ENCODE measurements at regions of chr6 and their contacts with region 1.

Region 1: GRCh38 chr6:63598049-63599036 is 26.1 kb downstream of the LOC128125822 start:
- DNase-seq: peak; percentile 82
- ATAC-seq: peak; percentile 100
- H3K4me3 Mint-ChIP-seq: peak overlapping the region; percentile 82
- H3K27ac Mint-ChIP-seq: peak overlapping the region; percentile 20
- H3K4me1 Mint-ChIP-seq: peaks cover 22% of the 10 kb centered on the region
- H3K27me3 Mint-ChIP-seq: peaks cover 3% of the 10 kb centered on the region

Region 2: GRCh38 chr6:63573140-63573898 is 25.0 kb before region 1 on chr6:
- CTCF ChIA-PET with region 1: interaction called, 17 read pairs
- POLR2A ChIA-PET with region 1: interaction called, 8 read pairs
- DNase-seq: peak; percentile 76
- ATAC-seq: peak; percentile 40
- H3K4me3 Mint-ChIP-seq: peak overlapping the region; percentile 96
- H3K27ac Mint-ChIP-seq: peak overlapping the region; percentile 97
- H3K4me1 Mint-ChIP-seq: peaks cover 40% of the 10 kb centered on the region
- H3K27me3 Mint-ChIP-seq: no peaks in the 10 kb centered on the region

Region 3: DNA sequence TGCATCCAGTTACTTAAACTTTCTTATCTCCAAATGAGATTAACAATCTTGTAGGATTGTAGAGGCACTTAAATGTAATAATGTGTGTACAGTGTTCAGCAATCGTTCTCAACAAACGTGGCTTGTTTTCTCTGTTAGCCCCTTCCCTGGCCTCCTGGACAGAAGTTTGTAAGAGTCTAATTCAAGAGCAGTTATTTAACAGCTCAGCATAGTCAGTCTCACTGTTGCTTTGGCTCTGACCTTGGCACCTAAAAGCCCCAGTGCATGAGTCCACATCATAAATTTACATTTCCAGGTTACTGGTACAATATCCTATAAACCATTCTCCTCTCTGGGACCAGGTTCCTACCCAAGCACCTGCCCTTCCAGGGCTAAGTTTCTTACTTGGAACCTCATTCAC is 25.7 kb after region 1 on chr6:
- CTCF ChIA-PET with region 1: interaction called, 14 read pairs
- POLR2A ChIA-PET with region 1: no interaction called
- DNase-seq: no peak
- ATAC-seq: no peak
- H3K4me3 Mint-ChIP-seq: no peak overlapping the region
- H3K27ac Mint-ChIP-seq: no peak overlapping the region
- H3K4me1 Mint-ChIP-seq: no peaks in the 10 kb centered on the region
- H3K27me3 Mint-ChIP-seq: peaks cover 17% of the 10 kb centered on the region

Region 4: DNA sequence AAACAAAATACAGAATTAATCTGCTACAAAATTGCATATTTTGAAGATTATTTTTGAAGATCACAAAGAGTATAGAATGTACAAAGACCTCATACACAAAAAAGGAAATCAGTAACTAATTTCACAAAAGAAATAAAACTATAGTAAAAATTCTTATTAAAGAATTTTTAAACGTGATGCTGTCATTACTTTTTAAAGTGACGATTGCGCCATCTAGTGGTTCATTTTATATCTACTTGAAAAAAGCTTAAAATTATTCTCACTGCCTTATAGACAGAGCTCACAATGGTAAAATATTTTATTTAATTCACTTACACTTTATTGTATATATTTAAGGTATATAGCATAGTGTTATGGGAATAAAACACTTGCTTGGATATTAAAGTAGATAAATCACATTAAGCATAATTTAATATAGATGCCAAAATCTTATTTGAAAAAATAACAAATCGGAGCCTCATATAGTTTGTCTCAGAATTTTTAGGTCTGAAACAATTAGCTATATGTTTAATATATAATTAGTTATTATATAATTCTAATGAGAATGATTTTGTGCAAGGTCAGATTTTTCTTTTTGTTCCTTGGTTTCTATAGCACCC is 166.1 kb after region 1 on chr6:
- CTCF ChIA-PET with region 1: interaction called, 72 read pairs
- POLR2A ChIA-PET with region 1: interaction called, 4 read pairs
- DNase-seq: no peak
- ATAC-seq: no peak
- H3K4me3 Mint-ChIP-seq: no peak overlapping the region
- H3K27ac Mint-ChIP-seq: no peak overlapping the region
- H3K4me1 Mint-ChIP-seq: no peaks in the 10 kb centered on the region
- H3K27me3 Mint-ChIP-seq: peaks cover 22% of the 10 kb centered on the region

Measured in activated CD8-positive, alpha-beta T cell treated with anti-CD3 and anti-CD28 coated beads, Interleukin-2, amount 10 ng/mL, durations not matched to agents 7 days and 5 days (primary cell).